ENCODE measurements at regions of chr16 and their contacts with region 1.

Region 1: DNA sequence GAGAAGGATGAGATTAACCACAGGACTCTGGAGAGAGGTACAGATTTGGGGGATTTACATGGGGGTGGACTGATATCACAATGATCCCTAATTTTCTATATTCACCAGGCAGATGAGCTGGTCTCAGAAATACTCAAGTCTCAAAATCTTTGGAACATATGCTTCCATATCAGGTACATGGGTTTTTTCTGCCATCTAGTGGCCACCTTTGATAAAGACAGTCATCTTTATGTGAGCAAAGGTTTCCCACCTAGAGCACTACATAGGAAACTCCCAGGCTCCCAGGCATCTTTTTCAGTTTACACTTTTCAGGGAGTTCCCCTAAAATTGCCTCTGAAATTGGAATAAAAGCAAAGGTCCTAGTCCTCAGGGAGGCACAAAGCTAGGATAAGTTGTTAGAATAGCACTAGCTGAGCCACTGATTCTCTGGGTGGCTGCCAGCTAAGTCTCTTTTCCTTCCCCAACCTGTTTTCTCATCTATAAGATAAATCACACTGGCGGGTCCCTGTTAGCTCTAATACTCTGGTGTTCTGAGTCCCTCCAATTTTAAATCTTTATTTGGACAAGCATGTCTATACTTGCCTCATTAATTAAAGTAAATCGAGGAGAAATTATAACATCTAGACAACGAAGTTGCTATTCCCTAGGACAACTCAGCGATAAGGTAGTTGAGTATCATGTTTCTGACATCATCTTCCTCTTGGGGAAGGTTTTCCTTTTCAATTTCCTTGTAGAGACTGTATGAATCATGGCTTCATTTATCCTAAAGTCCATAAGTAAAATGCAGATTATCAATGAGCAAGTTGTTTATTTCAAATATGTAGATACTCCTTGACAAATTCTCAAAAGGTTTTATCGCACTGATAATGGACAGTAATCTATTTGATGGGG is 19.0 kb upstream of the MON1B start:
- DNase-seq: no peak
- H3K4me3 ChIP-seq: no peak overlapping the region
- H3K27ac ChIP-seq: no peak overlapping the region
- H3K4me1 ChIP-seq: no peaks in the 10 kb centered on the region
- H3K27me3 ChIP-seq: peaks cover 29% of the 10 kb centered on the region
- CTCF ChIP-seq: peak; percentile 81

Region 2: DNA sequence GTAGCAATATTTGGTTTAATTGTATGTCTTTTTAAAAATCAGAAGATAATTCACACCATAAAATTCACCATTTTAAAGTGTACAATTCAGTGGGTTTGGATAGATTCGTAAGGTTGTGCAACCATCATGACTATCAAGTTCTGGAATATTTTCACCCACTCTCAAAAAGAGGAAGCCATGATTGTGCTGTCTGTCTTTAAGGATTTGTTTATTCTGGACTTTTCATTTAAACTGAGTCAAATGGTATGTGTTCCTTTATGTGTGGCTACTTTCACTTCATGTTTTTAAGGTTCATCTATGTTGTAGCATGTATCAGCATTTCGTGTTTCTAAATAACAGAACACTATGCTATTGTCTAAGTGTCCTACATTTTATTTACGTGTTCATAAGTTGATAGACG is 1377.6 kb before region 1 on chr16:
- intact Hi-C with region 1: loop called (anchors 5 kb)
- DNase-seq: no peak
- H3K4me3 ChIP-seq: no peak overlapping the region
- H3K27ac ChIP-seq: no peak overlapping the region
- H3K4me1 ChIP-seq: no peaks in the 10 kb centered on the region
- H3K27me3 ChIP-seq: peaks cover 18% of the 10 kb centered on the region
- CTCF ChIP-seq: no peak

Region 3: GRCh38 chr16:76668207-76668725 is 503.7 kb before region 1 on chr16:
- intact Hi-C with region 1: loop called (anchors 10 kb)
- DNase-seq: no peak
- H3K4me3 ChIP-seq: no peak overlapping the region
- H3K27ac ChIP-seq: no peak overlapping the region
- H3K4me1 ChIP-seq: no peaks in the 10 kb centered on the region
- H3K27me3 ChIP-seq: no peaks in the 10 kb centered on the region
- CTCF ChIP-seq: no peak

Measured in left ventricle myocardium inferior (tissue), 1 donor.